ENCODE measurements at regions of chr17 and their contacts with region 1.

Region 1: GRCh38 chr17:48997083-48997826 is at the start of gene IGF2BP1:
- DNase-seq: no peak
- ATAC-seq: peak in 1 of 4 donors; percentile 18
- H3K4me3 ChIP-seq: peak within 1 kb of the TSS in 11 of 12 donors; percentile 1 to 44 (median 19)
- H3K27ac ChIP-seq: no peak within 1 kb of the TSS
- H3K4me1 ChIP-seq: peaks cover 0 to 32% (median 15%) of the 10 kb centered on the region in 12 donors
- H3K27me3 ChIP-seq: peaks cover 60 to 100% (median 98%) of the 10 kb centered on the region in 9 donors
- CTCF ChIP-seq: no peak
- POLR2A ChIP-seq: no peak
- total RNA-seq, gene IGF2BP1: not detected

Region 2: DNA sequence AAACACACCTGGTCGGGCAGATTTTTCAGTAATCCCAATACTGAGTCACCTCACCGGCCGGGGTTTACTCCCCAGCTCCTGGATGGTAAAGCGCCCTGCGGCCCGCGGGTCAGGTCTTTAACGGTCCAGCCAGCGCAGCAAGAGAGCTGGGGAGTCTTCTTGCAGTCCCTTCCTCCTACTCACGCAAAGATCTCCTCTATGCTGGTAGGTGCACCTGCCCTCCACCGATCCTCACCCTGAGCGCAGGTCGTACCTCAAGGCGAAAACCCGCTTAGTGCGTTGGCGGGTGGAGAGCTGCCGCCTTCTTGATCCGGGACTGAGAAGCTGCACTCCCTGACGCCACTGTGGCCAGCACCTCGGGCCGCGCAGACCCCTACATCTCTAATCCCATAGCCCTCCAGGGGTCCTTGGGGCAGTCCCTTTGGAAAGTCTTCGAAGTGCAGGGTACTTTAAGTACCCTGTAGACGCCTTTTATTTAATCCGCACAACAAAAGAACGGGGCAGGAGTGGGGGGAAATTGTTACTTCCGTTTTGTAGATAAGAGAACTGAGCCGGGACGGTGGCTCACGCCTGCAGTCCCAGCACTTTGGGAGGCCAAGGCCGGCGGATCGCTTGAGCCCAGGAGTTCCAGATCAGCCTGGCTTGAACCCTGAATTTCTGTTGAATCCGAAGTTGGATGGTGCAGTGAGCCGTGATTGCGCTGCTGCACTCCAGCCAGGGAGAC is 258.3 kb before region 1 on chr17:
- intact Hi-C with region 1: loop called in 2 of 10 experiments (anchors 10 kb)
- DNase-seq: no peak
- ATAC-seq: no peak
- H3K4me3 ChIP-seq: no peak overlapping the region
- H3K27ac ChIP-seq: no peak overlapping the region
- H3K4me1 ChIP-seq: no peaks in the 10 kb centered on the region
- H3K27me3 ChIP-seq: peaks cover 57 to 100% (median 94%) of the 10 kb centered on the region in 9 donors
- CTCF ChIP-seq: no peak
- POLR2A ChIP-seq: no peak

Region 3: DNA sequence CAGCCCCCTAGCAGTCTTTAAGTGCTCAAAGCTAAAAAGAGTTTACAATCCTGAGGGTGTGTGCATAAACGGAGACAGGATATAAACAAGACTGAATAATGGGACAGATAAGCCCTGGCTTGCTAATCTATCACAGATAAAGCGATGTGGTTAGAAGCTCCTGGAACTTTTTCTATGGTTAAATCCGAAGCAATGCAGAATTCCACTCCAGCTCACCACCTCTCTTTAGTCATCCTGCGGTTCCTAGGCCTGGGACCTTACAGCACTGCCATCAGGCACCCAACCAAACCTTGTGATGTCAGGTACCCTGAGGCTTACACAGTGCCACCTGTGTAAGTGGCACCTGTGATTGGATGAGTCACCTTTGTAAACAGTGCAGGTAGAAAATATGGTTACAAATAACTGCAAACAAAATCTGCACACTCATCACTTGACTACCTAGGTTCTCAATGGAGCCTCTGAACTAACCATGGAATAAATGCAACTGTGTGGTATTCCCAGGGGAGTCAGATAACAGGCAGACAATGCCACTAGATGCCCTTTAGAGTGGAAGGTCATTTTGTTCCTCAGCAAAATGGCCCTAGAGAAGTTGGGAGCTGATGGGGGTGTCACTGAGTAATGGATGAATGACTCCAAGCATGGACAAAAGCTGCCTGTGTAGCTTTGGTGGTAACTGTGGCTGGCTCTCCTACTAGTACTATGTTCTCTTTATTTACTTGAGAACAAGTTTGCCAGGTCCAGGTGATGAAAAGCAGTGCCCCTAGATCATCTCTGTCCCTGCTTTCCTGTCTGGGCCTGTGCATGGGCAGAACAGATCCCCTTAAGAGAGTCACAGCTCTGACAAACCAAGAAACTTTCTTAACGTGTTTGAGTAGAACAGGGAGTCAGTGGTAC is 104.0 kb after region 1 on chr17:
- intact Hi-C with region 1: no loop called
- DNase-seq: no peak
- ATAC-seq: no peak
- H3K4me3 ChIP-seq: no peak overlapping the region
- H3K27ac ChIP-seq: no peak overlapping the region
- H3K4me1 ChIP-seq: no peaks in the 10 kb centered on the region
- H3K27me3 ChIP-seq: peaks cover 0 to 20% (median 4%) of the 10 kb centered on the region in 9 donors
- CTCF ChIP-seq: no peak
- POLR2A ChIP-seq: no peak

Measured in heart left ventricle (tissue), 16 donors.